CD14-positive monocyte (primary cell): ENCODE measurements at regions of chr1 and their contacts with region 1.

Region 1: DNA sequence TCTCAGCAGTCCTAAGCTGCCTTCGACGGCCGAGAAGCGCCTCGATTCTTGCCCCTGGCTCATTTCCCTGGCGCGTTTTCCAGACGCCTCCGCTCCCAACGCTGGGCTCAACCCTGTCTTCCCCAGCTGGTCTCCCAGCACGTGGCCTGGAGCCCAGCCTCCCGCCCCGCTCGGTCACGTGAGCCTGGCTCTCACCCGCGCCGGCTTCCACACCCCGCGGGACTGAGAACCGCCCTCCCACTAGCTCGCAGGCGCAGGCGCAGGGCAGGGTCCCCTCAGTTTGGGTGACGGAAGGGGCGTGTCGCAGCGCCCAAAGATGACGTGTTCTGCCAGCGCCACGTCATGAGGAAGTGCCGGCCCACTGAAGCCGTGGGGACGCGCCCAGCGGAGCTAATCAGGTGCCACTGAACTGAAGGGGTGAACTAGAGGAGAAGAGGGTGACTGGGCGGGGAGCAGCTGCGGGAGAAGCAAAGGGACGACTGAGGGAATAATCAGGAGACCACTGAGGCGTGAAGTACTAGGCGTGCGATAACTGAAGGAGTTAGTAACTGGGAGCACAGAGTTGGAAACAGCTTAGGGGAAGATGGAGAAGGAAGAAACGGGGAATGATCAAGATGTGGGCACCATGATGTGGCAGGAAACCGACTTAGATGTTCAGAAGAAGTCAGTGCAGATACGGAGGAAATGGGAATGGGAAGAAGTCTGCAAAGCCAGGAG is at the start of gene DHDDS:
- DNase-seq: peak; percentile 98 to 99 (median 99)
- H3K4me3 ChIP-seq: peak within 1 kb of the TSS; percentile 56 to 91 (median 84)
- H3K4me3 Mint-ChIP-seq: peak within 1 kb of the TSS; percentile 94 to 100
- H3K27ac ChIP-seq: peak within 1 kb of the TSS; percentile 58 to 89
- H3K27ac Mint-ChIP-seq: peak within 1 kb of the TSS; percentile 96 to 100 (median 97)
- H3K4me1 ChIP-seq: peaks cover 26 to 30% of the 10 kb centered on the region in 2 donors
- H3K4me1 Mint-ChIP-seq: peaks cover 23% of the 10 kb centered on the region
- H3K27me3 ChIP-seq: peaks cover 0 to 4% of the 10 kb centered on the region in 2 donors
- H3K27me3 Mint-ChIP-seq: peaks cover 4 to 11% (median 9%) of the 10 kb centered on the region in 3 donors
- CTCF ChIP-seq: no peak
- polyA plus RNA-seq, gene DHDDS: 21.3 to 27.4 (median 24.0) TPM

Region 2: DNA sequence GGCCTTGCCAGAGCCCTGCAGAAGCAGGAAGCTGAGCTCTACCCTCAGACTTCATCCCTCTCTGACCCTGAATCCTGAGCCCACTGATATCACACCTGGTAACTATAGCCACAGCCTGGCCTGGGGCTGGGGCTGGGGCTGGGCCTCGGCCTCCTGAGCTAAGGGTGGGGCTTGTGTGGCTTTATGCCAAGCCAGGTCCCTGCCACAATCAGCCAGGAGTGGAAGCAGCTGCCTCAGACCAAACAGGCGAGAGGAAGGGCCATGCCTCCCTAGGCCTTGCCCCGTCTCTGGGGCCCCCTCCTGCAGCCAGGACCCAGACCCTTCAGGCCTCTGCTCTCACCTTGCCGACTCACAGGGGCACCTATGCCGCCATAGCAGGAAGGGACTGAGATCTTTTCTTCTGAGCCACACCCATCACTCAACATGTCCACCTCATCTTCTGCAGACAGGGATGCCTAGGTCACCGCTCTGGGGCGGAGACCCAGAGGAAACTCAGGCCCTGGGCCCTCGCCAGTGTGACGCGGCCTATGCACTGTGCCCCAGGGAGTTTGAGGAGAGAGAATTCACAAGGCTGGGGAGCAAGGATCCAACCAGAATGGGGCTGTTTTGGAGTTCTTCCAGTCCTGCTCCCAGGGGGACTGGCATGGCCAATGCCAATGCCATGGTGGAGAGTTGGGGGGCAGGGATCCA is 131.4 kb before region 1 on chr1:
- intact Hi-C with region 1: no loop called
- DNase-seq: no peak
- H3K4me3 ChIP-seq: no peak overlapping the region
- H3K4me3 Mint-ChIP-seq: no peak overlapping the region
- H3K27ac ChIP-seq: peak overlapping the region in 1 of 2 donors; percentile 59
- H3K27ac Mint-ChIP-seq: peak overlapping the region in 5 of 7 donors; percentile 18 to 82 (median 55)
- H3K4me1 ChIP-seq: peaks cover 40 to 62% of the 10 kb centered on the region in 2 donors
- H3K4me1 Mint-ChIP-seq: peaks cover 64% of the 10 kb centered on the region
- H3K27me3 ChIP-seq: no peaks in the 10 kb centered on the region
- H3K27me3 Mint-ChIP-seq: peaks cover 0 to 2% (median 0%) of the 10 kb centered on the region in 3 donors
- CTCF ChIP-seq: no peak

Region 3: GRCh38 chr1:26472901-26473845 is 41.0 kb after region 1 on chr1:
- intact Hi-C with region 1: loop called in 1 of 2 experiments (anchors 2 kb)
- DNase-seq: peak; percentile 93 to 95 (median 93)
- H3K4me3 ChIP-seq: peak overlapping the region; percentile 51 to 92 (median 81)
- H3K4me3 Mint-ChIP-seq: peak overlapping the region; percentile 93 to 96
- H3K27ac ChIP-seq: peak overlapping the region; percentile 86 to 90
- H3K27ac Mint-ChIP-seq: peak overlapping the region; percentile 78 to 93 (median 87)
- H3K4me1 ChIP-seq: peaks cover 37 to 47% of the 10 kb centered on the region in 2 donors
- H3K4me1 Mint-ChIP-seq: peaks cover 52% of the 10 kb centered on the region
- H3K27me3 ChIP-seq: no peaks in the 10 kb centered on the region
- H3K27me3 Mint-ChIP-seq: peaks cover 0 to 3% (median 0%) of the 10 kb centered on the region in 3 donors
- CTCF ChIP-seq: no peak

Region 4: GRCh38 chr1:27044613-27045151 is 612.5 kb after region 1 on chr1:
- intact Hi-C with region 1: no loop called
- DNase-seq: peak; percentile 76 to 87 (median 80)
- H3K4me3 ChIP-seq: peak overlapping the region in 1 of 3 experiments; percentile 62
- H3K4me3 Mint-ChIP-seq: peak overlapping the region; percentile 34 to 72
- H3K27ac ChIP-seq: no peak overlapping the region
- H3K27ac Mint-ChIP-seq: peak overlapping the region in 1 of 7 donors; percentile 24
- H3K4me1 ChIP-seq: peaks cover 8 to 9% of the 10 kb centered on the region in 2 donors
- H3K4me1 Mint-ChIP-seq: peaks cover 19% of the 10 kb centered on the region
- H3K27me3 ChIP-seq: peaks cover 0 to 5% of the 10 kb centered on the region in 2 donors
- H3K27me3 Mint-ChIP-seq: peaks cover 6 to 11% (median 7%) of the 10 kb centered on the region in 3 donors
- CTCF ChIP-seq: peak; percentile 95